Breast epithelium (tissue), 4 donors: ENCODE measurements at regions of chr12 and their contacts with region 1.

Region 1: DNA sequence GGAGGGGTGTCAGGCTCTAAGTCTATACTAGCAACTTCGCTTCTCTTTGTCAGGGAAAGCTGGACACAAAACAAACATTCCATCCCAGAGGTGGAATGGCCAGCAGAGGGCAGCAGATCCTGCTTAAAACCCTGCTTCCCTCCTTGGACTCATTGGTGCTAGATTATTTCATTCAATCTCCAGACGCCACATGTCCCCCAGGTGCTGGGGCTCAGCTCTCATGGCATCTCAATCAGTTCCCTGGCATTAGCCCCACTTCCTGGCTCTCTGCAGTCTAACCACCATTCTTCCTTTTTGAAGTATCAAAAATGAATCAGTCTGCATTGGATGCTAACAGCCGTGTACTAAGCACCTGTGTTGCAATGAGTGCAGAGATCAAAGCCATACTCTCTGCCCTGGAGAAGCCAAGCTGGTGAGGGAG is 8.1 kb upstream of the PPP1R1A start:
- DNase-seq: peak; percentile 31 to 71
- H3K4me3 ChIP-seq: no peak overlapping the region
- H3K27ac ChIP-seq: no peak overlapping the region
- H3K4me1 ChIP-seq: no peaks in the 10 kb centered on the region
- H3K27me3 ChIP-seq: no peaks in the 10 kb centered on the region
- CTCF ChIP-seq: peak; percentile 47 to 63 (median 48)
- POLR2A ChIP-seq: no peak

Region 2: GRCh38 chr12:54565310-54565985 is 31.1 kb before region 1 on chr12:
- intact Hi-C with region 1: loop called (anchors 2 kb)
- DNase-seq: no peak
- H3K4me3 ChIP-seq: no peak overlapping the region
- H3K27ac ChIP-seq: no peak overlapping the region
- H3K4me1 ChIP-seq: no peaks in the 10 kb centered on the region
- H3K27me3 ChIP-seq: no peaks in the 10 kb centered on the region
- CTCF ChIP-seq: no peak
- POLR2A ChIP-seq: no peak

Region 3: GRCh38 chr12:54950071-54950727 is 353.7 kb after region 1 on chr12:
- intact Hi-C with region 1: loop called (anchors 5 kb)
- DNase-seq: no peak
- H3K4me3 ChIP-seq: no peak overlapping the region
- H3K27ac ChIP-seq: no peak overlapping the region
- H3K4me1 ChIP-seq: no peaks in the 10 kb centered on the region
- H3K27me3 ChIP-seq: no peaks in the 10 kb centered on the region
- CTCF ChIP-seq: no peak
- POLR2A ChIP-seq: no peak